ENCODE measurements at regions of chr5 and their contacts with region 1.

Region 1: GRCh38 chr5:10563945-10564837 is at the start of gene ANKRD33B:
- DNase-seq: peak; percentile 90
- ATAC-seq: peak; percentile 84
- H3K4me3 Mint-ChIP-seq: peak within 1 kb of the TSS; percentile 78
- H3K27ac Mint-ChIP-seq: no peak within 1 kb of the TSS
- H3K4me1 Mint-ChIP-seq: peaks cover 19% of the 10 kb centered on the region
- H3K27me3 Mint-ChIP-seq: peaks cover 13% of the 10 kb centered on the region
- total RNA-seq, gene ANKRD33B: 4.6 to 4.9 TPM

Region 2: DNA sequence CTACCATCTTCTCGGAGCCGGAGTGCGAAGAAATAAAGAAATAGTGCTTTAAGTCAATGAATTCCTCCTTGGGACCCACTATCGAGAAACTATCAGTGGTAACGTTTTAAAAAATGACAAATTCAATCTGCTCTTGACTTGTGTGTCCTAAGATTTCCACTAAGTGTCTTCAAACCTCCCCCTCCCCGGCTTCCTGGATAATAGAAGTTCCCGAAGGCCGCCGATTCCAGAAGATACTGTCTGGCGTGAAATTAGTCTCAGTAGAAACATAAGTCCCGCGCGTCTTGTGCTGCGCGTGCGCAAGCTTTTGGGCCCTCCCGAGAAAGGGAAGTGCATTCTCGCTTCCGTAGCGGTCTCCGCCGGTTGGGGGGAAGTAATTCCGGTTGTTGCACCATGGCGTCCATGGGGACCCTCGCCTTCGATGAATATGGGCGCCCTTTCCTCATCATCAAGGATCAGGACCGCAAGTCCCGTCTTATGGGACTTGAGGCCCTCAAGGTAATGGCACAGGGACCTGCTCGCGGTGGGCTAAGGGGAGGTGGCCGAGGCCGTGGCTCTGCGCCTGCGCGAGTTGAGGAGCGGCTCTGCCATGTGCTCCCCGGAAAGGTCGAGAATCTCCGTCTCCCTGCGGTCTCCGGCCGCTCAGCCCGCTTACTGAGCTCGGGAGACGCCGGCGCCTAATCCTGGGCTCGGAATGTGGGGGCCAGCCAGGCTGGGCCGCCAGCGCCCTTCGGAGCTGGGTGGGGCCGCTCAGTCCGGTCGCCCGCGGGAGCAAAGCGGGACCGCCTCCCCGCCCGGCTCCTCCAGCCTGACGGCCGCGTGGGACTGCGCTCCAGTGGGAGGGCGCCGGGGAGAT is 314.0 kb before region 1 on chr5 and contains the start of gene CCT5:
- CTCF ChIA-PET with region 1: interaction called, 3 read pairs
- POLR2A ChIA-PET with region 1: no interaction called
- intact Hi-C with region 1: loop called in 1 of 2 experiments (anchors 1 kb)
- DNase-seq: peak; percentile 93
- ATAC-seq: peak; percentile 82
- H3K4me3 Mint-ChIP-seq: peak within 1 kb of the TSS; percentile 92
- H3K27ac Mint-ChIP-seq: peak within 1 kb of the TSS; percentile 100
- H3K4me1 Mint-ChIP-seq: peaks cover 47% of the 10 kb centered on the region
- H3K27me3 Mint-ChIP-seq: no peaks in the 10 kb centered on the region
- total RNA-seq, gene CCT5: 347 to 461 TPM

Region 3: GRCh38 chr5:10343486-10343885 is 220.7 kb before region 1 on chr5:
- CTCF ChIA-PET with region 1: no interaction called
- POLR2A ChIA-PET with region 1: no interaction called
- intact Hi-C with region 1: no loop called
- DNase-seq: no peak
- ATAC-seq: no peak
- H3K4me3 Mint-ChIP-seq: no peak overlapping the region
- H3K27ac Mint-ChIP-seq: no peak overlapping the region
- H3K4me1 Mint-ChIP-seq: no peaks in the 10 kb centered on the region
- H3K27me3 Mint-ChIP-seq: no peaks in the 10 kb centered on the region

Region 4: DNA sequence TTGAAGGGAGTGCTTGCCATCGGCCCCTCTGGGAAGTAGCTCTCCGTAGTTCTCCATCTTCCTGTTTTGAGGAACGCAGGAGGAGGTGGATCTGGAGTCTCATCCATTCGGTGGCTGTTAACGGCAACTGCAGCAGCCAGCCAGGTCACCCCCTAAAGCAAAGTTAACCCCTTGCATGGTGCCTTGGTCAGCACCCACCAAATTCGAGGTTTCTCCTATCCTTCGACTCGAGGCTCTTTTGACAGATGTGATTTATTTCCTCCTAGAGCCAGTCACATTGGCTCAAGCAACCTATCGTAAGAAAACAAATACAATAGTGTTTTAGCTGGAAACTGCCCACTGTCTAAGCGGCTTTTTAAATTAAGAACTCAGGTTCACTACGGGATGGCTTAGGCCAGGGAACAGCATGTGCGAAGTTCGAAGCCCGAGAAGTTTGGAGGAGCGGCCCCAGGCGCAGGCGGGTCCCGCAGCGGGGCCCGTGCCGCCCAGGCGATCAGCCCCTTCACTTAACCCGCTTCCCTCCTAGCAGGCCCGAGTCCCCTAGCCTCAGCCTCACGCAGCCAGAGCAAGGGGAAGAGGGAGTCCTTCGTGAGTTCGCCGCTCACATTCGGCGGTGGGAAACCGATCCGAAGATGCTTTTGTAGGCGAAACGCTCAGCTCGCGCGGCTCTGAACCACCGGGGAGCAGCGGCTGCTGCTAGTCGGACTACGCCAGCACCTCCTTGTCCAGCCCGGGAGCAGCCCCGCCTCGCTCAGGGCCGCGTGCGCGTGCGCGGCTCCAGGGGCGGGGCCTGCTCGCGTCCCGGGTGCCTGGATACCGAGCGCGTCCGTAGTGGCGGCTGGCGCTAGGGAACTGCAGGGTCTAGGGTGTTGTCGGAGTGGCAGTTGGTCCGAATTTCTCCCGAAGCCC is 122.9 kb before region 1 on chr5 and contains the start of gene ROPN1L:
- CTCF ChIA-PET with region 1: no interaction called
- POLR2A ChIA-PET with region 1: no interaction called
- intact Hi-C with region 1: loop called in 1 of 2 experiments (anchors 1 kb)
- DNase-seq: peak; percentile 87
- ATAC-seq: peak; percentile 98
- H3K4me3 Mint-ChIP-seq: peak within 1 kb of the TSS; percentile 72
- H3K27ac Mint-ChIP-seq: no peak within 1 kb of the TSS
- H3K4me1 Mint-ChIP-seq: peaks cover 31% of the 10 kb centered on the region
- H3K27me3 Mint-ChIP-seq: peaks cover 3% of the 10 kb centered on the region
- total RNA-seq, gene ROPN1L: 0.28 TPM in 1 of 2 experiments, not detected in the other

Region 5: DNA sequence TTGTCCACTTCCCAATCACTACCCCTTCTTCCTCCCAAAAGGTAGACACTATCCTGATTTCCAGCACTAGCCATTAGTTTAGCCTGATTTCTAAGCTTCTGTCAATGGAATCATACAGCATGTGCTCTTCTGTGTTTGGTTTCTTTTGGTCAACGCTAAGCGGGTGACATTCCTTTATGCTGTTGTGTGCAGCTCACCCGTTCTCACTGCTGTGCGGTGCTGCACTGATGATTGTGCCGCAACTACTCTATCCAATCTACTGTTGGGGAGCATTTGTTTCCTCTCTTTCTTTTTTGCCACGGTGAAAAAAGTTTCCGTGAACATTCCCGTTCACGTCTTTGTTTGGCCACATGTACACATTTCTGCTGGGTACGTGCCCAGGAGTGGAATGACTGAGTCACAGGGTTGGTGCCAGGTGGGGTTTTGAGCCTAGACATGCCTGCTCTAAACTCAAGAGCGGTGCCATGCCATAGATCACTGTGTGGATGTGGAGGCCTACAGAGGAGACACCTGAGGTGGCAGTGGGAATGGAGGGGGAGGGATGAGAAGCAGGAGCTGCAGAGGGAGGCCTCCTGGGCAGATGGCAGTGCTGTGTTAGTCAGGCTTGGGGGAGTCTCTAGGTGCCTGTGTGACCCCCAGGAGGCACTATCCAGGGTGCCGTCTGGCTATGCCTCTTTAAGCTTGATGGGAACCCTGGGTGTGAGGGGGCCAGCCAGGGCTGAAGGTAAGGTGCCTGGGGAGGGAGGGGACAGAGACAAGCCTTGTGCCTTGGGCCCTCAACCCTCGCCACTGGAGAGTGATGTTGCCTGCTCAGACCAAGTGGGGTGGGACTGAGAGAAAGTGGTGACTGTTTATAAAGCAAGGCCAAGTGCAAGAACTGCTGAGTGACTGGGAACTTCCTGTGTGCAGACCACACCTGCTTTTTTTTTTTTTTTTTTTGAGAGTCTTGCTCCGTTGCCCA is 11.7 kb before region 1 on chr5:
- CTCF ChIA-PET with region 1: no interaction called
- POLR2A ChIA-PET with region 1: no interaction called
- intact Hi-C with region 1: no loop called
- DNase-seq: no peak
- ATAC-seq: peak; percentile 58
- H3K4me3 Mint-ChIP-seq: no peak overlapping the region
- H3K27ac Mint-ChIP-seq: peak overlapping the region; percentile 10
- H3K4me1 Mint-ChIP-seq: peaks cover 7% of the 10 kb centered on the region
- H3K27me3 Mint-ChIP-seq: peaks cover 4% of the 10 kb centered on the region

Region 6: DNA sequence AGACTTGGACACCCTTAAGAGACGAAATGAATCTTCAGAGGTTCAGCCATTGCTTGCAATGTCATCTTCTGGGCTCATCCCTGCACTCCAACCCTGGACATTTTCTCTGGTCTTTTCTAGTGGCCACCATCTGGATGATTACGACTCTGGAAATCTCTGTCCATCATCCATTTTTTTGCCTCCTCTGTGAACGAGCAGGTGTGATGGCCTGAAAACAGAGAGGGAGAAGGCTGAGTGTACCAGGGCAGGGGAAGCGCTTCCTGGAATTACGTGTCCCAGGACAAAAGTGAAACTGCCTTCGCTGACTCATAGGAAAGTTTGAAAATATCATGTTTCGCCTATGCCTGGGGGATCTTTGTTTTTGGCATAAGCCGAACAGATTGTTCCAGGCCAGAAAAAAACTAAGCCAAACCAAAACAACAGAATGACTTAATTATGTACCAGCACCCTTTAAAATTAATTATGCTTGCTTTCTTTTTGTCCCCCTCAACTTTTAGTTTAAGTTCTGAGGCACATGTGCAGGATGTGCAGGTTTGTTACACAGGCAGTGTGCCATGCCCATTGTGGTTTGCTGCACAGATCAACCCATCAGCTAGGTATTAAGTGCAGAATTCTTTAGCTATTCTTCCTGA is 31.6 kb after region 1 on chr5:
- CTCF ChIA-PET with region 1: no interaction called
- POLR2A ChIA-PET with region 1: no interaction called
- intact Hi-C with region 1: loop called (anchors 2 to 5 kb)
- DNase-seq: peak; percentile 71
- ATAC-seq: peak; percentile 87
- H3K4me3 Mint-ChIP-seq: no peak overlapping the region
- H3K27ac Mint-ChIP-seq: no peak overlapping the region
- H3K4me1 Mint-ChIP-seq: peaks cover 40% of the 10 kb centered on the region
- H3K27me3 Mint-ChIP-seq: peaks cover 14% of the 10 kb centered on the region

Region 7: GRCh38 chr5:10627160-10627701 is 63.0 kb after region 1 on chr5:
- CTCF ChIA-PET with region 1: interaction called, 11 read pairs
- POLR2A ChIA-PET with region 1: no interaction called
- intact Hi-C with region 1: loop called (anchors 1 to 2 kb)
- DNase-seq: peak; percentile 38
- ATAC-seq: no peak
- H3K4me3 Mint-ChIP-seq: peak overlapping the region; percentile 63
- H3K27ac Mint-ChIP-seq: peak overlapping the region; percentile 48
- H3K4me1 Mint-ChIP-seq: peaks cover 32% of the 10 kb centered on the region
- H3K27me3 Mint-ChIP-seq: peaks cover 13% of the 10 kb centered on the region

Region 8: DNA sequence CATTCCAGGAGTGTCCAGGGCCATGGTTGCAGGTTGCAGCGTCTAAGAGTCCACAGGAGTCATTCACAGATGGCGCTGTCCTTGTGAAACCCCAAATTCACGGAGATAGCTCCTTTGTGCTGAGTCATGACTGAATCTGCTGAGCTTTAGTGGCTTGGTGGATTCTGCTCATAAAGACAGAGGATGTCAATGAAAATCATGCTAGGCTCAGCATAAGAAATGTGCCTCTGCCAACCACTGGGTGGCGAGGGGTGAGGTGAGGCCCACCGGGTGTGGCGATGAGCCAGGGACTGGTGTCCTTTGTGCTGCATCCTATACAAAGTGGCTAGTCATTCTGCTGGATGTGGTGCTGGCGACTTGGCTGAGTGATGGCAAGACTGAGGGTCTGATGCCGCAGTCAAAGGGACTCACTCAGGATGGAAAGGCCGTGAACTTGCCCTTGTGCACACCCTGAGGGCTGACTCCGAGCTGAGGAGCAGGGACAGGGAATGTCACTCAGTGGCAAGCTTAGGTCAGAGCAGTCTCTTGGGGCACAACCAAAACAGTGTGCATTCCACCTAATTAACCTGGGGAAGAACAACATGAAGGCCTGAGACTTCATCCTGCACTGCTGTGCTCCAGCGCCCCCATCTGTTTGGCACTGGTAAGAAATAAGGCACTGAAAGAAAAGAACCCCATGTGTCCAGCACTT is 125.3 kb after region 1 on chr5:
- CTCF ChIA-PET with region 1: no interaction called
- POLR2A ChIA-PET with region 1: no interaction called
- intact Hi-C with region 1: loop called in 1 of 2 experiments (anchors 5 kb)
- DNase-seq: peak; percentile 68
- ATAC-seq: peak; percentile 65
- H3K4me3 Mint-ChIP-seq: no peak overlapping the region
- H3K27ac Mint-ChIP-seq: peak overlapping the region; percentile 58
- H3K4me1 Mint-ChIP-seq: peaks cover 5% of the 10 kb centered on the region
- H3K27me3 Mint-ChIP-seq: no peaks in the 10 kb centered on the region

Region 9: GRCh38 chr5:10808347-10809226 is 244.4 kb after region 1 on chr5:
- CTCF ChIA-PET with region 1: no interaction called
- POLR2A ChIA-PET with region 1: no interaction called
- intact Hi-C with region 1: no loop called
- DNase-seq: no peak
- ATAC-seq: no peak
- H3K4me3 Mint-ChIP-seq: no peak overlapping the region
- H3K27ac Mint-ChIP-seq: no peak overlapping the region
- H3K4me1 Mint-ChIP-seq: no peaks in the 10 kb centered on the region
- H3K27me3 Mint-ChIP-seq: peaks cover 14% of the 10 kb centered on the region